Left ventricle myocardium superior (tissue), 1 donor: ENCODE measurements at regions of chr3 and their contacts with region 1.

Region 1: DNA sequence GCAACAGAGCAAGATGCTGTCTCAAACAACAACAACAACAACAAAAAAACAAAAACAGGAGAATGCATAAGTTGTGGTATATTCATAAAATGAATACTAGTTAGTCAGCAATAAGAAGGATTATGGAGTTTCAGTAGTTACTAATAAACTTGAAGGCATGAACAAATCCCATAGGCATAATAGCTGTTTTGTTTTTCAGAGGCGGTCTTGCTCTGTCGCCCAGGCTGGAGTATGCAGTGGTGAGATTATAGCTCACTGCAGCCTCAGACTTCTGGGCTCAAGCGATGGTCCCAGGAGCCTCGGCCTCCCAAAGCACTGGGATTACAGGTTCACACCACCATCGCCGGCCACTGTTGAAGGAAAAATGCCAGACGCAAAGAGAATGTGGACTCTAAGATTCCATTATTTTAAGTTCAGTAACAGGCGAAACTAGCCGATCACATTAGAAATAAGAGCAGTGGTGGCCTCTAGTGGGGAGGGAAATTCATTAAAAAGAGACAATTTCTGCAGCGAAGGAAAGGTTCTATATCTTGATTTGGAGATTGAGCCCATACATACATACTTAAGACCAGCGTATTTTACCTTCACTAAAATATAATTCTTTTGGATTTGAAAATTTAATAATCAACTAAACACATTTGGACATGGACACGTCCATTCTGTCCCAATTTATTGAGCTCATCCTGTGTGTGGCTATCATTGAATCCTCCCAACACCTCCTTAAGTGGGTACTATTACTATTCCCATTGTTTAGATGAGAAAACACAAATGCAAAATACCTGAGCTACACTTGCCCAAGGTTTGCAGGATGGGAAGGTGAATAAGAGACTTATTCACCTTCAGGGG is 27.4 kb upstream of the HDAC11 start:
- DNase-seq: no peak
- ATAC-seq: peak; percentile 60

Region 2: GRCh38 chr3:13091898-13092611 is 360.7 kb before region 1 on chr3:
- intact Hi-C with region 1: loop called (anchors 10 kb)
- DNase-seq: peak; percentile 90
- ATAC-seq: peak; percentile 87

Region 3: GRCh38 chr3:14064910-14065309 is 612.2 kb after region 1 on chr3:
- intact Hi-C with region 1: no loop called
- DNase-seq: no peak
- ATAC-seq: no peak